Heart right ventricle (tissue), 16 donors: ENCODE measurements at regions of chr1 and their contacts with region 1.

Region 1: GRCh38 chr1:172449585-172450534 is 6.0 kb upstream of the PIGC start:
- DNase-seq: peak; percentile 50 to 51
- ATAC-seq: peak; percentile 78 to 92 (median 88)
- H3K4me3 ChIP-seq: peak overlapping the region in 3 of 10 donors; percentile 18 to 27 (median 20)
- H3K27ac ChIP-seq: peak overlapping the region in 7 of 10 donors; percentile 4 to 47 (median 34)
- H3K4me1 ChIP-seq: peaks cover 0 to 30% (median 9%) of the 10 kb centered on the region in 9 donors
- H3K27me3 ChIP-seq: no peaks in the 10 kb centered on the region
- CTCF ChIP-seq: peak; percentile 79 to 93 (median 81)

Region 2: DNA sequence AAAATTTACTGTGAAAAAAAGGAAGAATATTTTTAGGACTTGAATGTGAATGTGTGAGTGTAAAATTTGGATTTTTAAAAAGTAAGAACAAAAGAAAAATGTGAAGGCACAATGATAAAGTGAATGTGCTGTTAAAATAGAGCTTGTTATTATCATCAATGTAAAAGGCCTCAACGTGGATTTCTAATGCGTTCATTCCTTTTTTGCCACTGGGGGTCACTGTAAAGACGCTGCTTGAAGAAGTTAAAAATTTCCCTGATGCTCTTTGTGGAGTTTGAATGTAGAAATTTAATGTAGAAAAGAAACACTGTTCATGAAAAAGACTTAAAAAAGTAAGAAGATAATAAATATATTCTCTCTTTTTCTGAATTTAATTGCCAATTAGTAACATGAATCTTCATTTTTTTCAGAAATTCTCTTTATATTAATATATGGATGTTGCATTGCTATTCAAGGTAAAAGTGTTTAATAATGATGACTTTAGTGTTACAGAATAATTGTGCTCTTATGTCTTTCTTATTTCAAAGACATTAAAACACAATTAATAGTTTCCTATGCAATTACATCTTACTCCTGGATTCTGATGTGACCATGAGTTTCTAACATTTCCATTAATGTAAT is 447.0 kb before region 1 on chr1:
- intact Hi-C with region 1: loop called in 3 of 10 experiments (anchors 5 to 10 kb)
- DNase-seq: peak in 1 of 2 donors; percentile 9
- ATAC-seq: no peak
- H3K4me3 ChIP-seq: no peak overlapping the region
- H3K27ac ChIP-seq: no peak overlapping the region
- H3K4me1 ChIP-seq: peaks cover 0 to 10% (median 0%) of the 10 kb centered on the region in 9 donors
- H3K27me3 ChIP-seq: no peaks in the 10 kb centered on the region
- CTCF ChIP-seq: peak; percentile 25 to 81 (median 68)

Region 3: DNA sequence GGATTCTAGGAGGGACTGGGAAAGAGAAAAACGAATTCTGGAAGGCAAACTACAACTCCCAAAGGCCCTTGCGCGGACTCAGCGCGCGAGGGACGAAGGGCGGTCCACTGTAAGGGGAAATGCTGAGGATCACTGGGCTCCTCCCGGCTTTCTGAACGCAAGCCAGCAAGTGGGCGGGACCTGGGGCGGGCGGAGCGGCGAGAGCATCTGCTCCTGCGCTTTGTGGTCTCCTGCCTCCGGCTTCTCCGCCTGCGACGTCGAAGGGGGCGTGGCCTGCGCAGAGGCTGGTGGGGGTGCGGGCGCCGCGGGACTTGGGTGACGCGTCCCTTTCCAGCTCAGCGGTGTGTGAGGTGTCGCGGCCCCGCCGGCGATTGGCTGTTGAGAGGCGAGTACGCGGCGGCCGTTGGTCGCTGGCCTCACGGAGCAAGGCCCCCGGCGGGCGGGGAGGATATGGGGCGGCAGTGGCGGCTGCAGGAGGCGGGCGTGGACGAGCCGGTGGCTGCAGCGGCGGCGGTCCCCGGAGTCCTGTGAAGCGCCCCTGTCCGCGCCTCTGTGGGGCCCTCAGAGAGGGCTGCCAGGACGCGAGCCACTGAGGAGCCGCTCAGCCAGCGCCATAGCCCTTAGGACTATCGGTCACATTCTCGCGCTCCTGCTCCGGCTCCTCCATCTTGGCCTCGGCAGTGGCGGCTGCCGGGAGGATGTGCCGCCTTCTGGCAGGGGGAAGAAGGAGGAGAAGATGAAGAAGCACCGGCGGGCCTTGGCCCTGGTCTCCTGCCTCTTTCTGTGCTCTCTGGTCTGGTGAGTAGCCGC is 83.0 kb after region 1 on chr1 and contains the start of gene SUCO:
- intact Hi-C with region 1: loop called in 7 of 10 experiments (anchors 2 to 10 kb)
- DNase-seq: peak; percentile 100
- ATAC-seq: peak; percentile 95 to 99 (median 97)
- H3K4me3 ChIP-seq: peak within 1 kb of the TSS; percentile 66 to 93 (median 84)
- H3K27ac ChIP-seq: peak within 1 kb of the TSS; percentile 93 to 99 (median 97)
- H3K4me1 ChIP-seq: peaks cover 10 to 50% (median 39%) of the 10 kb centered on the region in 9 donors
- H3K27me3 ChIP-seq: no peaks in the 10 kb centered on the region
- CTCF ChIP-seq: peak in 4 of 9 donors; percentile 23 to 37 (median 26)
- total RNA-seq, gene SUCO: 18.5 to 31.4 (median 27.0) TPM

Region 4: GRCh38 chr1:172545396-172546004 is 95.6 kb after region 1 on chr1:
- intact Hi-C with region 1: loop called in 1 of 10 experiments (anchors 10 kb)
- DNase-seq: no peak
- ATAC-seq: no peak
- H3K4me3 ChIP-seq: no peak overlapping the region
- H3K27ac ChIP-seq: no peak overlapping the region
- H3K4me1 ChIP-seq: peaks cover 0 to 78% (median 48%) of the 10 kb centered on the region in 9 donors
- H3K27me3 ChIP-seq: no peaks in the 10 kb centered on the region
- CTCF ChIP-seq: no peak

Region 5: GRCh38 chr1:172585348-172585747 is 135.5 kb after region 1 on chr1:
- intact Hi-C with region 1: no loop called
- DNase-seq: no peak
- ATAC-seq: no peak
- H3K4me3 ChIP-seq: no peak overlapping the region
- H3K27ac ChIP-seq: no peak overlapping the region
- H3K4me1 ChIP-seq: peaks cover 0 to 40% (median 10%) of the 10 kb centered on the region in 9 donors
- H3K27me3 ChIP-seq: no peaks in the 10 kb centered on the region
- CTCF ChIP-seq: no peak

Region 6: DNA sequence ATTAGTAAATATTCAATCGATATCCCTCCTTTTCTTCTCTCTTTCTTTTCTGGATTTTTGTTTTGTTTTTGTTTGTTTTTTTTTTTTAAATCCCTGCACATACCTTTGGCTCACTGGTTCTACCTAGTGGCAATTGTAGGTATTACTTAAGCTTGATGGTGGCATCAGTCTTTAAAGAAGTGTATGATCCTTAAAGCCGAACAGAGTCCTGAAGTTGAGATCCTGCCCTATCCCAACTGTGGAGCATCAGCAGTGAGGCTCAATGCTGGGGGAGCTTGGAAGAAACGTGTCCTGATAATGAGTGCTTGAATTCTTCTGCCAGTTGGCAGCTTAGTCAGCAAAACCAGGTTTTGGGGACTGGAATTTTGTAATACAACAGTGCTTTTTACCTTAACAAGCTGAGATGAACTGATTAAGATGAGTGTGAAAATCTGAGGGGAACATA is 269.9 kb after region 1 on chr1:
- intact Hi-C with region 1: loop called in 9 of 10 experiments (anchors 2 to 10 kb)
- DNase-seq: no peak
- ATAC-seq: peak in 1 of 8 donors; percentile 55
- H3K4me3 ChIP-seq: no peak overlapping the region
- H3K27ac ChIP-seq: no peak overlapping the region
- H3K4me1 ChIP-seq: peaks cover 0 to 20% (median 0%) of the 10 kb centered on the region in 9 donors
- H3K27me3 ChIP-seq: no peaks in the 10 kb centered on the region
- CTCF ChIP-seq: peak; percentile 34 to 77 (median 69)